Cardiac septum (tissue), 1 donor: ENCODE measurements at regions of chr6 and their contacts with region 1.

Region 1: GRCh38 chr6:8983188-8983688 is 547.9 kb upstream of the SLC35B3 start:
- DNase-seq: no peak

Region 2: DNA sequence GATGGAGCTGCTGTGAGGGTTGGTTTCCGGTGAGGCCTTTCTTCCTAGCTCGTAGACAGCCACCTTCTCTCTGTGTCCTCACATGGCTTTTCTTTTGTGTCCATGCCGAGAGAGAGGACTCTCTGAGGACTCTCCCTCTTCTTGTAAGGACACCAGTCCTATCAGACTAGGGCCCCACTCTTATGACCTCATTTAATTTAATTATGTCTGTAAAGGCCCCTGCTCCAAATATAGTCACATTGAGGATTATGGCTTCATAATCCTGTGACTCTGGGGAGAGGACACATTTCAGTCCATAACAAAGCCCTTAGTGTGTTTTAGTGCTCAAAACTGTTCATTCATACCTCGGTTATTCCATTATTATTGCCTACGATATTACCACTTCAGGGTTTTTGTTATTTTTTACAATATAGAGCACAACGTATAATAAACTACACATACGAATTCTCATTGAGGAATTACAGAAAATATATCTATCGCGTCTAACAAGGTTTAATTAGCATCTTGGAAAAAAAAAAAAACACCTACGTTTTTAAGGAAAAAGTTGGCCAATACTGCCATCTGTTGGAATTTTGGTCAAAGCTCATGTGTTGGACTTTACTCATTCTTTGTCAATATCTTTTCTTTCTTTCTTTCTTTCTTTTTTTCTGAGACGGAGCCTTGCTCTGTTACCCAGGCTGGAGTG is 1451.6 kb after region 1 on chr6:
- intact Hi-C with region 1: loop called (anchors 5 kb)
- DNase-seq: no peak